K562 (cell line): ENCODE measurements at regions of chr7 and their contacts with region 1.

Region 1: GRCh38 chr7:138886501-138886917 is 88.5 kb upstream of the ATP6V0A4 start:
- DNase-seq: peak; percentile 64 to 74 (median 68)
- ATAC-seq: peak; percentile 82
- H3K4me3 ChIP-seq: no peak overlapping the region
- H3K27ac ChIP-seq: no peak overlapping the region
- H3K4me1 ChIP-seq: no peaks in the 10 kb centered on the region
- H3K27me3 ChIP-seq: peaks cover 52 to 61% of the 10 kb centered on the region in 2 experiments
- CTCF ChIP-seq: peak; percentile 63 to 93 (median 80); a peak in 5 of 6 replicates
- EP300 ChIP-seq: no peak
- POLR2A ChIP-seq: no peak
- RAD21 ChIP-seq: peak; percentile 69 to 82

Region 2: GRCh38 chr7:138981332-138982203 is 95.1 kb after region 1 on chr7 and contains the start of gene KIAA1549:
- CTCF ChIA-PET with region 1: no interaction called
- POLR2A ChIA-PET with region 1: interaction called, 6 read pairs
- in situ Hi-C with region 1: no loop called
- intact Hi-C with region 1: loop called (anchors 2 kb)
- DNase-seq: peak; percentile 80 to 98 (median 94)
- ATAC-seq: peak; percentile 97
- H3K4me3 ChIP-seq: peak within 1 kb of the TSS; percentile 37
- H3K27ac ChIP-seq: no peak within 1 kb of the TSS
- H3K4me1 ChIP-seq: peaks cover 0 to 14% of the 10 kb centered on the region in 2 experiments; a peak in 2 of 5 replicates
- H3K27me3 ChIP-seq: peaks cover 60 to 70% of the 10 kb centered on the region in 2 experiments
- CTCF ChIP-seq: peak in 2 of 3 experiments; percentile 49 to 70; a peak in 3 of 6 replicates
- EP300 ChIP-seq: no peak
- POLR2A ChIP-seq: no peak
- RAD21 ChIP-seq: peak in 1 of 2 experiments; percentile 62; a peak in 3 of 4 replicates
- polyA plus RNA-seq, gene KIAA1549: 0.01 TPM

Region 3: DNA sequence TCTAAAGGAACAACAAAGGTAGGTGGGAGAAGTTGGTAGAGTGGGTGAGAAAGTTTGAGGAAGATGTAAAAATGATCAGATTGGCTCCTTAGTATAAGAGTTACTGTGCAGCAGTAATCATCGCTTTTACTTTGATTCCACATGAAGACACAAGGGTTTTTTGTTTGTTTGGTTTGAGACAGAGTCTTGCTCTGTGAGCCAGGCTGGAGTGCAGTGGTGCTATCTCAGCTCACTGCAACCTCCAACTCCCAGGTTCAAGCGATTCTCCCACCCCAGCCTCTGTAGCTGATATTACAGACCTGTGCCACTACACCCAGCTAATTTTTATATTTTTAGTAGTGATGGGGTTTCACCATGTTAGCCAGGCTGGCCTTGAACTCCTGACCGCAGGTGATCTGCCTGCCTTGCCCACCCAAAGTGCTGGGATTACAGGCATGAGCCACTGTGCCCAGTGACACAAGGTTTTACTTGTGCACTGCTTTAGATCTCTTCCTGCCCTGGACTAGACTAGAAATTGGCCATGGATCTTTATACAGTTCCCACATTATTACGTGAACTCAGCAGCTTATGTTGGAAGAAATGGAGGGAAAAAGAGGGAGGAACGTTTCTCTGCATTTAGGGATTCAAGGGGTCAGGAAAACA is 483.9 kb after region 1 on chr7:
- CTCF ChIA-PET with region 1: no interaction called
- POLR2A ChIA-PET with region 1: no interaction called
- in situ Hi-C with region 1: no loop called
- intact Hi-C with region 1: no loop called
- DNase-seq: no peak
- ATAC-seq: peak; percentile 58
- H3K4me3 ChIP-seq: no peak overlapping the region
- H3K27ac ChIP-seq: peak overlapping the region; percentile 20; the same call in 2 of the 3 replicates
- H3K4me1 ChIP-seq: peaks cover 0 to 20% of the 10 kb centered on the region in 2 experiments; a peak in 3 of 5 replicates
- H3K27me3 ChIP-seq: no peaks in the 10 kb centered on the region
- CTCF ChIP-seq: no peak
- EP300 ChIP-seq: no peak
- POLR2A ChIP-seq: no peak
- RAD21 ChIP-seq: no peak